Dendritic cell treated with granulocyte-macrophage colony-stimulating factor and Interleukin-4, amounts not matched to agents 40 ng/mL and 50 ng/mL, for 4 days (primary cell): ENCODE measurements at regions of chr17 and their contacts with region 1.

Region 1: GRCh38 chr17:17496189-17497064 is at the start of gene RASD1:
- H3K4me3 Mint-ChIP-seq: peak within 1 kb of the TSS; percentile 76
- H3K27ac Mint-ChIP-seq: peak within 1 kb of the TSS; percentile 59
- H3K4me1 Mint-ChIP-seq: peaks cover 35% of the 10 kb centered on the region
- H3K27me3 Mint-ChIP-seq: peaks cover 56% of the 10 kb centered on the region

Region 2: GRCh38 chr17:17356149-17356930 is 140.1 kb before region 1 on chr17:
- intact Hi-C with region 1: loop called (anchors 5 kb)
- H3K4me3 Mint-ChIP-seq: no peak overlapping the region
- H3K27ac Mint-ChIP-seq: no peak overlapping the region
- H3K4me1 Mint-ChIP-seq: peaks cover 6% of the 10 kb centered on the region
- H3K27me3 Mint-ChIP-seq: peaks cover 7% of the 10 kb centered on the region

Region 3: DNA sequence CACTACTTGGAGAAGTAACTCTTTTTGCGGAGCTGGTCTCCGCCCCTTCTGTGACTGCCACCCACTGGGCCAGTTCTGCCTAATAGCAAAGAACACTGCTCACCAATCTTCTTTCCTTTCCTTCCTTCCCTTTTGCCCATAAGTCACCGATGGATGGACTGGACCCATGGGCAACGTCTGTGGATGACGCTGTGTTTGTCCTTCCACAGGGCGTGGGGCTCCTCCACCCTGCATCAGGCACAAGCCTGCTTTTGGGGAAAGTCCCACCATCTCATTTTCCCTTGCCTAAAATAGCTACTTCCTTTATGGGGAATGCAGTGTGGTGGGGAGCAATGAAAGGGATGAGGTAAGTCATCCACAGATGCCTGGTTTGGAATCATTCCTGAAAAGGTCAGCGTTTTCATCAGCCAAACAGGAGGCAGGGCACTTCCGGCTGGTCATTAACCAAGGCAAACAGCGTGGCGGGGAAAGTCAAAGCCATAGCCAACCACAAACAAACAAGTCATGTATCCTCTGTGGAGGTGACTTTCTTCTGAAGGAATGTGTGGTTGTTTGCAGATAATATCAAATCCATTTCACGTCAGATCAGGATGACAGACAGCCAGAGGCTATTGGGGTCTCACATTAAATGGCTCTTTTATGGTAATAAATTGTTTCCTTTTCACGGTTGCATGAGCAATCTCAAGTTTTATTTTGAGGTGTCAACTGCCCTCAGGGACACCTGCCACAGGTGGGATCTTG is 50.3 kb before region 1 on chr17:
- intact Hi-C with region 1: no loop called
- H3K4me3 Mint-ChIP-seq: no peak overlapping the region
- H3K27ac Mint-ChIP-seq: no peak overlapping the region
- H3K4me1 Mint-ChIP-seq: no peaks in the 10 kb centered on the region
- H3K27me3 Mint-ChIP-seq: peaks cover 6% of the 10 kb centered on the region

Region 4: DNA sequence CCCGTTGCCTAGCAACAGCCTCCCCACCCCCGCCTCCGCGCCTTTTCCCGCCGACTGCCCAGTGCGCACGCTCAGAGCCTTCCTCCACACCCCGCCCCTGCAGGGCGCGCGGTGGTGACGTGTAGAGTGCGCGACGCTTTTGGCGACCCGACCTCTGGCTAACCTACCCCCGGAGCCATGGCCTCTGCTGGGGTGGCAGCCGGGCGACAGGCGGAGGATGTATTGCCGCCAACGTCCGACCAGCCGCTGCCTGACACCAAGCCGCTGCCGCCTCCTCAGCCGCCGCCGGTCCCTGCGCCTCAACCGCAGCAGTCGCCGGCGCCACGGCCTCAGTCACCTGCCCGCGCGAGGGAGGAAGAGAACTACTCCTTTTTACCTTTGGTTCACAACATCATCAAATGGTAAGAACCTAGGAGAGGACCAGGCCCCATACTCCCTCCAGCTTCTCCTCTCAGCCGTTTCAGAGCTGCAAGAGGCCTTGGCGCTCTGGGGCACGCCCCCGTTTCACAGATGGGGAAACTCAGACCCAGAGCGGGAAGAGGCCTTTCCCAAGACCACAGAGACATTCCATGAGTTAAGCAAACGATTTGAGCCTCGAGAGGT is 19.5 kb before region 1 on chr17 and contains the start of gene MED9:
- intact Hi-C with region 1: loop called (anchors 2 kb)
- H3K4me3 Mint-ChIP-seq: peak within 1 kb of the TSS; percentile 91
- H3K27ac Mint-ChIP-seq: peak within 1 kb of the TSS; percentile 93
- H3K4me1 Mint-ChIP-seq: peaks cover 32% of the 10 kb centered on the region
- H3K27me3 Mint-ChIP-seq: peaks cover 3% of the 10 kb centered on the region

Region 5: DNA sequence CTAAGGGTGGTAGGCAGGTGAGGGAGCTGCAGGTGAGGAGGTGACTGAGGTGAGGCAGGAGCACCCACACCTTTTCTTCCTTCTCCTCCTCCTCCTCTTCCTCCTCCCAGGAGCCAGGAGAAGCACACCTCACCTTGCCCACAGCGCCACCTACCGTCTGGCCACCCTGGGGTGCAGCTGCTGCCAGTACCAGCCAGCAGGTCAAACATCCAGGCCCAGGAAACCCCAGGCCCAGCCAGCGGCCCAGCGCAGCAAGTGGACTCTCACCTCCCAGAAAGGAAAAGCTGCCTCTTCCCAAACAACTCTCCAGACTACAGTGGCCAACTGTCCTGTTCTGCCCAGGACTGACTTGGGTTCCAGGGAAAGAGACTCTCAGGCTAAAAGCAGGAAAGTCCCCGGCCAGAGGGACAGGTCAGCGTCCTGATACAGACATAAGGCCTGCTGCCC is 72.3 kb after region 1 on chr17:
- intact Hi-C with region 1: loop called (anchors 2 kb)
- H3K4me3 Mint-ChIP-seq: no peak overlapping the region
- H3K27ac Mint-ChIP-seq: no peak overlapping the region
- H3K4me1 Mint-ChIP-seq: peaks cover 7% of the 10 kb centered on the region
- H3K27me3 Mint-ChIP-seq: no peaks in the 10 kb centered on the region

Region 6: DNA sequence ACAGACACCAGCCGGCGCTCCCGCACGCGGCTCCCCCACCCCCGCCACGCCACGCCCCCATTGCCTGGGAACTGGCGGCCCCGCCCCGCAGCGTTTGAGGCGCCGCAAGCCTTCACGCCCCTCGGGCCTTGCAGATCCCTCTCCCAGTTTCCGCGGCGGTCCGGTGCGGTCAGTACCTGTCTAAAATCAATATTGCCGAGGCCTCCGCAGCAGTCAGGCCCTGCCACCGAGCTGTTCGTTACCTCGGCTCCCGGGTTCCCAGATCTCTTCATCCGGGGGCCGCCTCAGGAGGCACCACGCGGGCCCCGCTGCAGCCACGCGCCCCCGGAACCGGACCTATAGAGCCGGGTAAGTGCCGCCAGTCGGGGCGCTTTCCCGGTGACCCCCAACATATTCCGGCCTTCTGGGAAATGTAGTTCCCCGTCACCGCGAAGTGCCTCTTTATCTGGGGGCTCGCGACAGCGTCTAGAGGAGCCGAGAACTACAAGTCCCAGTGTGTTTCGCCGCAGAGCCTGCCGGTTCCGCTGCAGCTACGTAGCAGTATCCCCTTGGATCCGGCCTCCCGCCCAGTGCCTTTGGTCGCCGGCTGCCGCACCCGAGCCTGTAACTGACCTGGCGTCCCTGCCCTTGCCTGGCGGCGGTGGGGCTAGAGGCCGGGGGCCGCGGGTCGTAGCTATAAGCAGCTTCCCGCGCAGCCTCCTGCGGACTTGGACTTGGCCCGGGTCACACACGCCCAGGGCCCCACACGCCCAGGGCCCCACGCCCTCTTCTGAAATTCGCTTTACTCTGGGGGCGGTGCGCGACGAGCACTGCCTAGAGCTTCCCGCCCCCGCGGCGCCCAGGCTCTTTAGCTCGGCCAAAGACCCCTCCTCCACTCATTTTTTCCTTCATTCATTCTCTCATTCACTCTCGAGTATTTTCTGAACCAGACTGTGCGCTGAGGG is 95.2 kb after region 1 on chr17 and contains the start of gene PEMT:
- intact Hi-C with region 1: loop called (anchors 5 kb)
- H3K4me3 Mint-ChIP-seq: peak within 1 kb of the TSS; percentile 82
- H3K27ac Mint-ChIP-seq: peak within 1 kb of the TSS; percentile 88
- H3K4me1 Mint-ChIP-seq: peaks cover 26% of the 10 kb centered on the region
- H3K27me3 Mint-ChIP-seq: no peaks in the 10 kb centered on the region

Region 7: GRCh38 chr17:17641621-17642409 is 145.4 kb after region 1 on chr17:
- intact Hi-C with region 1: loop called (anchors 1 kb)
- H3K4me3 Mint-ChIP-seq: no peak overlapping the region
- H3K27ac Mint-ChIP-seq: no peak overlapping the region
- H3K4me1 Mint-ChIP-seq: peaks cover 25% of the 10 kb centered on the region
- H3K27me3 Mint-ChIP-seq: peaks cover 7% of the 10 kb centered on the region